GM10248 (cell line): ENCODE measurements at regions of chr10 and their contacts with region 1.

Region 1: DNA sequence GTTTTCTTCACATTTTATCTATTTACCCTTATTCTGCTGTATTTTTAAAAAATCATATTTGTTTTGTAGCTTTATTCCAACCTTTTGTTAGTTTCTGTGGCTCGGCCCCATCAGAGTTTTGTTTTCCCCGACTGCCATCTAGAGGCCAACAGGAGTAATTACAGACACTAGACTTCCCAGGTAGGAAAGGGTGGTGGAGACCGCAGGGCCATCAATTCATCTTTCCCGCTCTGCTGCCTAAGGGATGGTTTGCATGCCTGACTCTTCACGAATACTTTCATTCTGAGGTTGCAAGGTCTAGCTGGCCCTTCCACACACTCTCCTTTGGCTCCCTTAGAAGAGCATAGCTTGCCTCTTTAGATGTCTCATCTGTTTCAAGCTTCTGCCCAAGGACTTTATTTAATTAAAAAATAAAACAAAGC is 38.3 kb downstream of the LYZL2 start:
- DNase-seq: peak; percentile 47
- CTCF ChIP-seq: peak; percentile 45

Region 2: DNA sequence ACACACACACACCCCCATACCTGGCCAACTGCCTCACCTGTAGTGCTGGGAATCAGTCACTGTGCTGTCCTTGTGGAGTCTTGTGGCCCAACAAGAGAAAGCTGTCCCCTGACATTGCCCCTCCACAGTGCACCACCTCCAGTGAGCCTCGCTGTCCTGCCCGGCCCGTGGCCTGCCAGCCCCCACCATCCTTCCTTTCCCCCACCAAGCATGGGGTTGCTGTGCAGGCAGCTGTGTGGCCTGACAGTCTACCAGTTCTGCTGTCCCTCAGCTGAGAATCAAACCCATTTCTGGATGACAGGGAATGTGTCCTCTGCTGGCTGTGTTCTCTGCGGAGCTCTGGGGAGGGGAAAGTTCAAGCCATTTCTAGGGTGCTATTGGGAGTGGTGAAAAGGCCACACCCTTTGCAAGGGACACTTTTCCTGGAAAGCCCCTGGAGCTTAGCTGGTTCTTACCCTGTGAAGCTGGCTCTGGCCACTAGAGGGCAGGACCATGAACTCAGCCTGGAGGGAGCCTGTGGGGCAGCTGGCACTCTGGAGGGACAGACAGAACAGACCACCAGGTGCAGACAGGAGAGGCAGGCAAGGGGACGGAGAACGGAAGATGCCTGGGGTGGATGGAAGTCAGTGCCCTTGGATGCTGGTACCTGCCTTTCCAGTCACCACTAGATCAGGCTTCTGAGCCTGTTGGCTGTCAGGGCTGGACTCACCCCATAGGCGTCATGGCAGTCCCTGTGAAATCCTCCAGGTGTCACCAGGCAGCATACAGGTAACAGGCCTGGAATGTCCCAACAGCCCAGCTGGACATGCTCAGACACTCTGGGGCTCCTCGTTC is 231.7 kb before region 1 on chr10:
- CTCF ChIA-PET with region 1: interaction called, 74 read pairs
- POLR2A ChIA-PET with region 1: no interaction called
- DNase-seq: peak; percentile 71
- CTCF ChIP-seq: peak; percentile 90

Region 3: GRCh38 chr10:30392564-30392990 is 198.7 kb before region 1 on chr10:
- CTCF ChIA-PET with region 1: interaction called, 167 read pairs
- POLR2A ChIA-PET with region 1: no interaction called
- DNase-seq: peak; percentile 88
- CTCF ChIP-seq: peak; percentile 82

Region 4: GRCh38 chr10:30542001-30542894 is 49.0 kb before region 1 on chr10:
- CTCF ChIA-PET with region 1: interaction called, 25 read pairs
- POLR2A ChIA-PET with region 1: no interaction called
- DNase-seq: peak; percentile 42
- CTCF ChIP-seq: no peak

Region 5: GRCh38 chr10:30573721-30574431 is 17.4 kb before region 1 on chr10:
- CTCF ChIA-PET with region 1: interaction called, 10 read pairs
- POLR2A ChIA-PET with region 1: no interaction called
- DNase-seq: no peak
- CTCF ChIP-seq: no peak